ENCODE measurements at regions of chr3 and their contacts with region 1.

Region 1: GRCh38 chr3:25513642-25514266 is 85.7 kb downstream of the RARB start:
- DNase-seq: no peak
- ATAC-seq: no peak
- H3K4me3 Mint-ChIP-seq: no peak overlapping the region
- H3K27ac Mint-ChIP-seq: no peak overlapping the region
- H3K4me1 Mint-ChIP-seq: no peaks in the 10 kb centered on the region
- H3K27me3 Mint-ChIP-seq: peaks cover 5% of the 10 kb centered on the region

Region 2: DNA sequence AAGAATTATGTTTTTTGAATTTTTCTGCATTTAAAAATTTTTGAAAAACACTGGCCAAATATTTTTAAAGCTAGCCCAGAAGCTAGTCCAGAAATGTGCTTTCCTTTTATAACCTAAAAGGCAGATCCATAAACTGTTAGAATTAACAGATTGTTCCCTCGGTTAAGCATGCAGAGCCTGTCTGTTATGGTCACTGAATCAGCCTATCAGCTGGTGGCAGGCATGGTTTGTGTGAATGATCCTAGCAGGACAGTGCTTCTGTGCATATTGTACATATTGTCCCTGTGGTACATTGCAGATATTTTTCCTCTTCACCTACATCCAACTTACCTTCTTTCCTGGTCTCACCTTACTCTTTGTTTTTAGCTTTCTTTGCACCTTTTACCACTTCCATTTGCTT is 32.4 kb before region 1 on chr3:
- CTCF ChIA-PET with region 1: no interaction called
- POLR2A ChIA-PET with region 1: no interaction called
- intact Hi-C with region 1: loop called in 1 of 2 experiments (anchors 1 kb)
- DNase-seq: no peak
- ATAC-seq: no peak
- H3K4me3 Mint-ChIP-seq: no peak overlapping the region
- H3K27ac Mint-ChIP-seq: no peak overlapping the region
- H3K4me1 Mint-ChIP-seq: no peaks in the 10 kb centered on the region
- H3K27me3 Mint-ChIP-seq: peaks cover 5% of the 10 kb centered on the region